Sigmoid colon (tissue), 7 donors: ENCODE measurements at regions of chr7 and their contacts with region 1.

Region 1: DNA sequence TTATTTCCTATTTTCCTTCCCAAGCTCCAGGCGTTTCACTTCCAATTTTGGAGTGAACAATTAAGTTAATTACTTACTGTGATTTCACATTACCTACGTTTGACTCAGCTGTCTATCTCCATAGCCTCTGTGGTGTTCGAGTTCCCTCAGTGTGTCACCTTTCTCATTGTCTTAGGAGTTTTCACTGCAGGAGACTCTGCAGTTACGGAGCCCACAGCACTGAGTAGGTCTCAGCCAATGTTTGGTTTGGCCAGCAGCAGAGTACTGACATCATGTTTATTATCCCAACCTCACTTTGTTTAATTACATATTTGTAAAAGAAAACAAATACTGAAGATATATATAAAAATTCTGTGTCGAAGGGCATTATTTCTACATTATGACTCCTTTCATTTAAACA is 1123.9 kb downstream of the CNTNAP2 start:
- DNase-seq: no peak
- H3K4me3 ChIP-seq: no peak overlapping the region
- H3K27ac ChIP-seq: no peak overlapping the region
- H3K4me1 ChIP-seq: no peaks in the 10 kb centered on the region
- H3K27me3 ChIP-seq: no peaks in the 10 kb centered on the region
- CTCF ChIP-seq: no peak
- EP300 ChIP-seq: no peak
- POLR2A ChIP-seq: no peak

Region 2: GRCh38 chr7:147096629-147097028 is 143.8 kb before region 1 on chr7:
- intact Hi-C with region 1: no loop called
- DNase-seq: no peak
- H3K4me3 ChIP-seq: no peak overlapping the region
- H3K27ac ChIP-seq: no peak overlapping the region
- H3K4me1 ChIP-seq: no peaks in the 10 kb centered on the region
- H3K27me3 ChIP-seq: no peaks in the 10 kb centered on the region
- CTCF ChIP-seq: no peak
- EP300 ChIP-seq: no peak
- POLR2A ChIP-seq: no peak

Region 3: GRCh38 chr7:147510923-147511322 is 270.5 kb after region 1 on chr7:
- intact Hi-C with region 1: no loop called
- DNase-seq: no peak
- H3K4me3 ChIP-seq: no peak overlapping the region
- H3K27ac ChIP-seq: no peak overlapping the region
- H3K4me1 ChIP-seq: no peaks in the 10 kb centered on the region
- H3K27me3 ChIP-seq: no peaks in the 10 kb centered on the region
- CTCF ChIP-seq: no peak
- EP300 ChIP-seq: no peak
- POLR2A ChIP-seq: no peak

Region 4: GRCh38 chr7:148084138-148084537 is 843.7 kb after region 1 on chr7:
- intact Hi-C with region 1: loop called (anchors 5 kb)
- DNase-seq: no peak
- H3K4me3 ChIP-seq: no peak overlapping the region
- H3K27ac ChIP-seq: no peak overlapping the region
- H3K4me1 ChIP-seq: peaks cover 0 to 13% (median 0%) of the 10 kb centered on the region in 4 donors
- H3K27me3 ChIP-seq: no peaks in the 10 kb centered on the region
- CTCF ChIP-seq: peak in 2 of 4 experiments; percentile 41 to 63
- EP300 ChIP-seq: no peak
- POLR2A ChIP-seq: no peak